ENCODE measurements at regions of chr17 and their contacts with region 1.

Region 1: GRCh38 chr17:58417300-58418092 is at the start of gene RNF43:
- DNase-seq: peak; percentile 95
- H3K4me3 Mint-ChIP-seq: peak within 1 kb of the TSS; percentile 41
- H3K27ac Mint-ChIP-seq: peak within 1 kb of the TSS; percentile 18
- H3K4me1 Mint-ChIP-seq: peaks cover 18% of the 10 kb centered on the region
- H3K27me3 Mint-ChIP-seq: no peaks in the 10 kb centered on the region
- total RNA-seq, gene RNF43: 0.38 to 0.91 TPM

Region 2: DNA sequence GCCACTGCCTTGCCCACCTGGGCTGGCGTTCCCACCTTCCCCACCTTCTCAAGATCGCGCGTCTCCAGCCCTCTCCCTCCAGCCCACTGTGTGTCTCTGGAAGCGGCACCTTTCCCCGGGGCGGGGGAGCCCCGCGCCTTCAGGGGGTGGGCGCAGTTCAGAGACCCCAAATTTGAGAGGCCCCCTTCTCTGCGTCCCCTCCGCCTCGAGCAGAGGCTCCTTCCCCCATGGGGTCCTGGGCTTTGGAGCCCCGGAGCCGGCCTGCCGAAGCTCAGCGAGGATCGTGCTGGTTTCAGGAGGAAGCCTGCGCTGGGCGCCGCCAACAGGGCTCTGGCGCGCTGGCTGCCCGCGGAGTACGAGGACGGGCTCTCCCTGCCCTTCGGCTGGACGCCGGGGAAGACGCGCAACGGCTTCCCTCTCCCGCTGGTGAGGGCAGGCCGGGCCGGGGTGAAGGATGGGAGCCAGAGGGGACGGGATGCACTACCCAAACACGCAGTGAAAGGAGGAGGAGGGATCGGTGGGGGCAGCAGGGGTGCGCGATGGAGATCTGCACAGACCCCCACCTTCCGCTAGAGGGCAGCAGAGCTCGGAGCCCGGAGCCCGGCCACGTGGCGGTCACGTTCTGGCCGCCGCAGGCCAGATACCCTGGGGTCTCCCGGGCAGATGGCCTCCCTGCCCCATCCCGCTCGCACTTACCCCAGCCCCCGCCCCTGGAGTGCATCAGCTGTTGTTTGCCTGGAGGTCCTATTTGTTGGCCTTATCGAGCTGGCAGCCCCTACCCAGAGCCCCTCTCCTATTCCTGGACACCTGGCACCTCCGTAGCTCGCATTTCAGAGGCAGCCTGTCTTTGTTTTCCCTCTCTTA is 168.0 kb before region 1 on chr17:
- CTCF ChIA-PET with region 1: interaction called, 11 read pairs
- intact Hi-C with region 1: loop called (anchors 2 kb)
- DNase-seq: peak; percentile 82
- H3K4me3 Mint-ChIP-seq: peak overlapping the region; percentile 72
- H3K27ac Mint-ChIP-seq: no peak overlapping the region
- H3K4me1 Mint-ChIP-seq: peaks cover 11% of the 10 kb centered on the region
- H3K27me3 Mint-ChIP-seq: peaks cover 3% of the 10 kb centered on the region

Region 3: DNA sequence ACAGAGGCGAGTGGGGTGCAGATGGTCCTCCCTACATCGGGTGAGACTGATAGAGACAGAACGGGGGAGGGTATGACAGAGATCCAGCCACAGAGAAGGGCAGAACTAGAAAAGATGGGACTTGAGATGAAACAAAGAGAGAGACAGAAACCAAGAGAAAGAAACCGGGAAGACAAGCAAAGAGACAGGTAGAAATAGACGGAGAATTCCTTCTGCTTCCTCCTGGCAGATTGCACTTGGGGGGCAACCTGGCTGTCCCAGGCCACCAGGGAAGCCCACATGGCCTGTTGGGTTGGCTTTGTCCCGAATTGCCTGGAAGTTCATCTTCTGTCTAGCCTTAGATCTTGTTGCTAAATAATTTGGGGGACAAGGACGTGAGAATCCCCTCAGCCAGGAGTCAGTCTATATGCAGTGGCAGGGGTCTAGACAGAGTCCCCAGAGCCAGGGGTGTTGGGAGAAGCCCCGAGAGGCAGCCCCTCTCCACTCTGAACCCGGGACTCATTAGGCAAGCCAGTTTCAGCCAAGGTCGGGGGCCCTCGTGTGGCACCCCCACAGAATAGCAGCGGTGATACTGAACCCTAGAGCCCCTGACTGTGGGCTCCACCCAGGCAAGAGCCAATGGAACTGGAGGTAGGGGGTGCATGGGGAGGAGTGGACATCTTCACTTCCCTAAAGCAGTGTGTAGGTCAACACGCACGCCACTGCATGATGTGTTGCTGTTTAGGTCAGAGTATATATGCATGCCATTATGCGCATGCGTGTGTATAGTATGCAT is 88.3 kb before region 1 on chr17:
- CTCF ChIA-PET with region 1: interaction called, 7 read pairs
- intact Hi-C with region 1: loop called (anchors 1 kb)
- DNase-seq: peak; percentile 91
- H3K4me3 Mint-ChIP-seq: peak overlapping the region; percentile 92
- H3K27ac Mint-ChIP-seq: peak overlapping the region; percentile 99
- H3K4me1 Mint-ChIP-seq: peaks cover 40% of the 10 kb centered on the region
- H3K27me3 Mint-ChIP-seq: peaks cover 14% of the 10 kb centered on the region

Region 4: DNA sequence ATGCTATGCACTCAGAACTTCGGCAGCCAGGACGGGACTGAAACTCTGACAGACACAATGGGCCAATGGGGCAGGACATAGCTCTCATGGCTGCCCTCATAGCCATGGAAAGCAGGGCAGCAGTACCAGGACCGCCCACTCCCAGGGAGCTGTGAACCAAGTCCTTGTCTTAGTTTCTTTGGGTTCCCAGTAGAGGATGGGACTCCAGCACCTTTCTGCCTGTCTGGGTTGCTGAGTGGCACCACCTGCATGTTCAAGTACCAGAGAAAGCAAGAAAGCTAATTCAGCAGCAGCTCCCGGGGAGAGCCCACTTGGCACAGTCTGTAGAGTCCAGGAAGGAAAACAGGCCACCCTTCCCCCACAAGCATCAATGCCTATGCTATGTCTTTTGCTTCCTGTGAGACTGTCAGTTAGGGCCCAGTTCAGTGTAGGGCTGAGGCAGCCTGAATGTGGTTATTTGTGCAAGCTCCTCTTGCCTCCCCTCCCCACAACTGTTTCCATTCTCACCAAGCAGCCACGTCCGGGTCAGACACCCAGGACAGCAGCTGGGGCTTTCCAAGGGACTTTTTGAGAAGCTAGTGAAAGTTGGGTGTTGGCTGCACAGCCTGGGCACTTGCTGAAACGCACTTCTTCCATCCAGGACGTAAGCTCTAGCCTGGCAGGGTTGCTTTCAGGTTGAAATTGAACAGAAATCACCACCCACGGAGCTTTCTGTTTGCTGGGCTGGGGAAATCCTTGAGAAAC is 73.3 kb before region 1 on chr17:
- CTCF ChIA-PET with region 1: interaction called, 26 read pairs
- intact Hi-C with region 1: loop called (anchors 2 kb)
- DNase-seq: peak; percentile 98
- H3K4me3 Mint-ChIP-seq: peak overlapping the region; percentile 92
- H3K27ac Mint-ChIP-seq: peak overlapping the region; percentile 99
- H3K4me1 Mint-ChIP-seq: peaks cover 60% of the 10 kb centered on the region
- H3K27me3 Mint-ChIP-seq: no peaks in the 10 kb centered on the region

Region 5: GRCh38 chr17:58352014-58352842 is 65.3 kb before region 1 on chr17 and contains the start of gene SUPT4H1:
- CTCF ChIA-PET with region 1: interaction called, 13 read pairs
- intact Hi-C with region 1: loop called (anchors 1 kb)
- DNase-seq: peak; percentile 92
- H3K4me3 Mint-ChIP-seq: peak within 1 kb of the TSS; percentile 100
- H3K27ac Mint-ChIP-seq: peak within 1 kb of the TSS; percentile 97
- H3K4me1 Mint-ChIP-seq: peaks cover 47% of the 10 kb centered on the region
- H3K27me3 Mint-ChIP-seq: no peaks in the 10 kb centered on the region
- total RNA-seq, gene SUPT4H1: 76.6 to 76.9 TPM

Region 6: DNA sequence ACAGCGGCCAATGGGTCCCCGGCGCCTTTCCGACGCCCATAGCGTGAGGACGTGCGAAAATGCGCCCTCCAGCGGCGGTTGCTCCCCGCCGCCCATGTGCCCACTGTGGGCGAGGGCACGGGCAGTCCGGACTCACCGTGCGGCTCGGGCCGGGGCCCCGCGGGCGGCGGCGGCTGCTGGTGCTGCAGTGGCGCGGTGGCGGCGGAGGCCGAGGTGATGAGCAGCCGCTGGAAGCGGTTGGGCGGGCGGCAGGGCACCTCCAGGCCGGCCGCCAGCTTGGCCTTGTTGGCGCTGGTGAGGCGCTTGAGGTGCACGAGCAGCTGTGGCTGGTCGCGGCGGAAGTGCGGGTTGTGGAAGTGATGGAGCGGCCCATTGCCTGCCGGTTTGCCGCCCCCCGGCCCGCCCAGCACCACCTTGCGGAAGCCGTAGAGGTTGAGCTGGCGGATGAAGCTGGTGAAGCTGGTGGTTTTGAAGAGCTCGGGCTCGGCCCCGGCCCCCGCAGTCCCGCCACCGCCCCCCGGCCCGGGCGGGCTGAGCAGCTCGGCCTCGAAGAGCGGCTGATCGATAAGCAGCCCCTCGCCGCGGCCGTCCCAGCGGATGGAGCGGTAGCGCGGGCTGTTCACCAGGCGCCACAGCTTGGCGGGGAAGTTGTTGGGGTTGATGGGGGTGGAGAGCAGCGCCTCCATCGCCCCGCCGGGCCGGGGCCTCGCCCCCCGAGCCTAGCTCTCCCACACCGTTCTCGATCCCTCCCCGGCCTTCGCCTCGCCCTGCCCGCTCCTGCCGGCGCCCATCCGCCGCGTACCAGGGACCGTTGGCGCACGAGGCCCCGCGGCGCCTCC is 70.3 kb after region 1 on chr17 and contains the start of gene HSF5:
- CTCF ChIA-PET with region 1: interaction called, 5 read pairs
- intact Hi-C with region 1: loop called (anchors 5 kb)
- DNase-seq: peak; percentile 79
- H3K4me3 Mint-ChIP-seq: peak within 1 kb of the TSS; percentile 58
- H3K27ac Mint-ChIP-seq: no peak within 1 kb of the TSS
- H3K4me1 Mint-ChIP-seq: peaks cover 15% of the 10 kb centered on the region
- H3K27me3 Mint-ChIP-seq: no peaks in the 10 kb centered on the region
- total RNA-seq, gene HSF5: 3.6 to 4.1 TPM

Region 7: DNA sequence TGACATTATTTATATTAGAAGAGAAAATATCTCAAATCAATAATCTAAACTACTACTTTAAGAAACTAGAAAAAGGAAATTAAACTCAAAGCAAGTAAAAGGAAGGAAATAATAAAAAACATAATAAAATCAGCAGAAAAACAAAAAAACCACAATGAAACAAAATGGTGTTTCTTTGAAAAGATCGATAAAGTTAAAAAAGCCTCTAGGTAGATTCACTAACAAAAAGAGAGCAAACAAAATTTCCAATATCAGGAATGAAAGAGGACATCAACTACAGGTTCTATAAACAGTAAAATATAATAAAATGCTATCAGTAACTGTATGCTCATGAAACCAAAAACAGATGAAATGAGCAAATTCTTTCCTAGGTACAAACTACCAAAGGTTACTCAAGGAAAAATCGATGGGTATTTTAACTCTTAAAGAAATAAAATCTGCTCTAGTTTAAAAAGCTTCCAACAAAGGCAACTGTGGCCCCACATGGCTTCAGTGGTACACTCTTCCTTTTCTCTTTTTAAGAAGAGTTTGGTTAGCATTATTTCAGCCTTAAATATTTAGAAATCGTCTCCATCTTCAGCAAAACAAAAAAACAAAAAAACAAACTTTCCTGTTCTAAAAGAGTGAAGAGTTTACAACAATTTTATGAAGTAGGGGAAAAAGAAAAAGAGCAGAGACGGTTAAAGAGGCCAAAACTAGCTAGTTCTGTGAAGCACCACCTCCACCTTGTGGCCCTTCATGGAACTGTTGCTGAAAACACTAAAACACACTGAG is 587.0 kb after region 1 on chr17:
- CTCF ChIA-PET with region 1: no interaction called
- intact Hi-C with region 1: no loop called
- DNase-seq: peak; percentile 86
- H3K4me3 Mint-ChIP-seq: no peak overlapping the region
- H3K27ac Mint-ChIP-seq: peak overlapping the region; percentile 61
- H3K4me1 Mint-ChIP-seq: peaks cover 28% of the 10 kb centered on the region
- H3K27me3 Mint-ChIP-seq: no peaks in the 10 kb centered on the region

Measured in activated naive CD4-positive, alpha-beta T cell treated with anti-CD3 and anti-CD28 coated beads for 36 hours (primary cell).